OCI-LY7 (cell line): ENCODE measurements at regions of chr11 and their contacts with region 1.

Region 1: GRCh38 chr11:68121067-68121899 is at the start of gene CHKA:
- DNase-seq: peak; percentile 93
- H3K4me3 ChIP-seq: peak within 1 kb of the TSS; percentile 91
- H3K27ac ChIP-seq: peak within 1 kb of the TSS; percentile 61
- H3K4me1 ChIP-seq: peaks cover 35% of the 10 kb centered on the region
- CTCF ChIP-seq: no peak
- total RNA-seq, gene CHKA: 36.1 and 38.9 TPM in 2 replicates

Region 2: GRCh38 chr11:66172143-66172542 is 1949.1 kb before region 1 on chr11:
- CTCF ChIA-PET with region 1: no interaction called
- POLR2A ChIA-PET with region 1: interaction called, 10 read pairs
- intact Hi-C with region 1: no loop called
- DNase-seq: no peak
- H3K4me3 ChIP-seq: no peak overlapping the region
- H3K27ac ChIP-seq: no peak overlapping the region
- H3K4me1 ChIP-seq: peaks cover under 1% of the 10 kb centered on the region
- CTCF ChIP-seq: no peak

Region 3: DNA sequence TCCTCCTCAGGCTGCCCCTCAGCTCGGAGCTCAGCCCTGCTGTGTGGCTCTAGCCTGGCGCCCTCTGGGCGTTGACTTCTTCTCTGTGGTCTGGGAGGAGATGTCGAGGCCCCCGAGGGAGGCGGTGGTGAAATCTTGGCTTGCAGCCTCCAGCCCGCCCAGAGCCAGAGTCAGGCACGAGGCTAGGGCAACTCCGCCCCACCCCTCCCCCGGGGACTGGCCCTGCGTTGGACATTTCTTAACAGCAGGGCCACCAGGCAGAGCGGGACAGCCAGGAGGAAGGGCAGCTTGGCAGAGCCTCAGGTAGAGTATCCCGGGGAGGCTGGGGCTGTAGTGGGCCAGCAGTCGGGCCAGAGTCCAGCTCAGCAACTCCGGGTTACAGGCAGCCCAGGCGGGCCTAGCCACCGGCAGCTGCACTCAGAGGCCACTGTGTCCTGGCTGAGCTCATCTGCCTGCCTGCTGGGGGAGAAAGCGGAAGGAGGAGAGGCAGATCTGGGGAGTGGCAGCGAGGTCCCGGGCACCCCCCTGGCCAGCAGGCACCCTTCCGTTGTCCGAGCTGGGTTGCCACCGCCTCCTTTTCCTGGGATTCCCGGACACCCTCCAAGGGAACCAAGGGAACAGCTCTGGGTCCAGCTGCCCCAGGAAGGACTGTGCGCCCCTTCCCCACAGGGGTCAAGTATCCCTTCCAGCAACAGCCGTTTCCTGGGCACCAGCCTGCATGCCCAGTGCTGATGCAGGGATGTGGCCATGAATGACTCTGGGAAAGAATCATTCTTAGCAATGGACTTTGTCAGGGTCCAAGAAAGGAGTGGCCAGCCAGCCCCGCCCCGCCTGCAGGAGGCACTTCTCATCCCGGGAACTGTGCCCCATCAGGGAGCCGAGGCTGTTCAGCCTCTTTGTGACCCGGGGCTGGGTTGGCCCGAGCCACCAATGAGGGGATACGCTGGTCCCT is 110.9 kb before region 1 on chr11 and contains the start of gene ALDH3B1:
- CTCF ChIA-PET with region 1: no interaction called
- POLR2A ChIA-PET with region 1: no interaction called
- intact Hi-C with region 1: no loop called
- DNase-seq: peak; percentile 49
- H3K4me3 ChIP-seq: peak within 1 kb of the TSS; percentile 18
- H3K27ac ChIP-seq: peak within 1 kb of the TSS; percentile 52
- H3K4me1 ChIP-seq: peaks cover 40% of the 10 kb centered on the region
- CTCF ChIP-seq: no peak
- total RNA-seq, gene ALDH3B1: 0.50 TPM in 1 of 2 replicates, not detected in the other

Region 4: DNA sequence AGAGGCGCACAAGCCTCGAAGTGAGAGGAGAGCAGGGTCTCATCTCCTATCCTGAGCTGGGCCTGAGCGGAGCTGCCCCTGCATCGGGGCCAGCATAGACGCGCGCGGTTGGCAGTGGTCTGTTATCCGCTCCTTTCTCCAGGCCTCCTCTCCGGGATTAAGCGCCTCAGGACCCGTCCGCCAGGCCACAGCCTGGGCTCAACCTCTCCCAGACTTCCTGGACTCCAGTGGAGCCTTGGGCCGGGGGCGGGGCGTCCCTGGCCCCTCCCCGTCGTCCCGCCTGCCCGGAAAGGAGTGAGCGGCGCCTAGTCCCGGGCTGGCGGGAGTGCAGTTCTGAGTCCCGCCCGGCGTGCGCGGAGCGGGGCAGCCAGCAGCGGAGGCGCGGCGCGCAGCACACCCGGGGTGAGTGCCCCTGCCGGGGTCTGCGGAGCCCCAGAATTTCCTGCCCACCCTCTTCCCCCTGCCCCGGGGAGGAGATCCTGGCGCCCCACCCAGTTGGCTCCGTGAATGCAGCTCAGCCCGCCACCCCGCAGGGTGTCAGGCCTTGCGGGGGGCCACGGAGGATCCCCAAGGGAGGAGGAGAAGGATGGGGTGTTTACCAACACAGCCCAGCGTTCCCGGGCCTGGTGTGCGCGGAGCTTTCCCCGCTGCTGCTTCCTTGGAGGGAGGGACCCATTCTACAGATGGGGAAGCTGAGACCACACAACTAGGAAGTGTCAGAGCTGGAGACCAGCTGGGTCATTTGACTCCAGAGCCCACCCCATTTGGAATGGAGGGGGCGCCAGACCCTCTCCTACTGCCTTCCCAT is 82.4 kb before region 1 on chr11 and contains the start of gene TCIRG1:
- CTCF ChIA-PET with region 1: no interaction called
- POLR2A ChIA-PET with region 1: interaction called, 3 read pairs
- intact Hi-C with region 1: loop called (anchors 2 kb)
- DNase-seq: peak; percentile 77
- H3K4me3 ChIP-seq: peak within 1 kb of the TSS; percentile 79
- H3K27ac ChIP-seq: peak within 1 kb of the TSS; percentile 79
- H3K4me1 ChIP-seq: peaks cover 30% of the 10 kb centered on the region
- CTCF ChIP-seq: no peak
- total RNA-seq, gene TCIRG1: 148 and 199 TPM in 2 replicates

Region 5: DNA sequence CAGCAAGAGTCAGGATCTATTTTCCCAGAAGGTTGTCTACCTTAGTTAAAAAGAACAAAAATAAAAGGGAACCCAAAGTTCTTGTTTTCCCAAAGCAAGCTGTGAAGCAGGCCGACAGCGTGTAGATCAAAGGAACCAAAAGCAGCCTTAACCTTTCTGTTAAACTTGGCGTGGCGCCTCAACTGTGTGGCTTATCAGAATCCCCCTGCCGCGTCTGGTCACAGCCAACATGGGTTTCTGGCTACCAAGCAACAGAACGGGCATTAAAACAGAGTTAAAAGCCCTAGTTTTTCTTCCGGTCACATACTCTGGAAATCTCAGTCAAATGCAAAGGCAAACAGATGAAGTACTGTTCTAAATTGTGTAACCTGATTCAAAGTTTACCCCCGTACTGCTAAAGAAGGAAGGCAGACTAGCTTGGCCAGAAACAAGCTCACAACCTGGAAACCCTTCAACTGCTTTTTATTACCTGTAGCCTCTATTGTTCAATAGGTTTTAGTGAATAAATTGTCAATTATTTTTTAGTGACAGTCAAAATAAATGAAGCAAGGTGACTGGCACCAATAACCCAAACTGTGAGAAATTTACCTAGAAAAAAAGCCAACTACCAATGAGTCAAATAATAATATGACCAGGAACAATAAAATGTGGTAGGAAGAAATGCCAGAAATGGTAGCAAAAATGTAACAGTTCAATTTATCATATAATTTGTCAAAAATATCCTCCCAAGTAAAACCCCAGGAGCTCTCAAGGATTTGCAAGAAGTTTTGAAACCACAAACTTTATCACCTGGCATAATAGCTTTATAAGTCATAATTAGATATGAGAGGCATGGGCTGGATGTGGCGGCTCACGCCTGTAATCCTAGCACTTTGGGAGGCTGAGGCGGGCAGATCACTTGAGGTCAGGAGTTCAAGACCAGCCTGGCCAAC is 21.5 kb before region 1 on chr11:
- CTCF ChIA-PET with region 1: no interaction called
- POLR2A ChIA-PET with region 1: interaction called, 4 read pairs
- intact Hi-C with region 1: loop called (anchors 2 kb)
- DNase-seq: peak; percentile 62
- H3K4me3 ChIP-seq: peak overlapping the region; percentile 50
- H3K27ac ChIP-seq: peak overlapping the region; percentile 80
- H3K4me1 ChIP-seq: peaks cover 25% of the 10 kb centered on the region
- CTCF ChIP-seq: no peak

Region 6: DNA sequence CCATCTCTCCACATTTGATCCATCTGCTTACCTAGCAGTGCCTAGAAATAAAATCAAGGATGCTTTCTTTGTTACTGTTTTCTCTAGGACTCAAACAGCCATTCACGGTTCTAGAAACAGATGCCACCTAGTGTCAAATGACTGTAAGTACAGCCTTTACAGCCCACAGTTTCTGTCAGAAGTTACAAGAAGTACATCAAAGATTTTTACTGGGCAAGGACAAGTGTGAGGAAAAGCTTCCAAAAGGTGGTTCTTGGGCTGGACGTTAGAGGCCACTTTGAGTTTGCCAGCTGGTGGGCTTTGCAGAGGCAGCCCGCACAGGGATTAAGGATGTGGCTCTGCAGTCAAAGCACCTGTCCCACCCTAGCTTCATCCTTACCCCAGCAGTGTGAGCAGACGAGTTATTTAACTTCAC is 84.9 kb after region 1 on chr11:
- CTCF ChIA-PET with region 1: no interaction called
- POLR2A ChIA-PET with region 1: no interaction called
- intact Hi-C with region 1: loop called (anchors 5 kb)
- DNase-seq: peak; percentile 77
- H3K4me3 ChIP-seq: no peak overlapping the region
- H3K27ac ChIP-seq: no peak overlapping the region
- H3K4me1 ChIP-seq: peaks cover 22% of the 10 kb centered on the region
- CTCF ChIP-seq: peak; percentile 91